ENCODE measurements at regions of chr2 and their contacts with region 1.

Region 1: GRCh38 chr2:73651586-73652230 is 9.5 kb upstream of the NAT8 start:
- DNase-seq: no peak
- H3K4me3 ChIP-seq: no peak overlapping the region
- H3K27ac ChIP-seq: no peak overlapping the region
- H3K4me1 ChIP-seq: no peaks in the 10 kb centered on the region
- H3K27me3 ChIP-seq: peaks cover 5 to 11% of the 10 kb centered on the region in 2 experiments
- CTCF ChIP-seq: no peak
- POLR2A ChIP-seq: no peak

Region 2: DNA sequence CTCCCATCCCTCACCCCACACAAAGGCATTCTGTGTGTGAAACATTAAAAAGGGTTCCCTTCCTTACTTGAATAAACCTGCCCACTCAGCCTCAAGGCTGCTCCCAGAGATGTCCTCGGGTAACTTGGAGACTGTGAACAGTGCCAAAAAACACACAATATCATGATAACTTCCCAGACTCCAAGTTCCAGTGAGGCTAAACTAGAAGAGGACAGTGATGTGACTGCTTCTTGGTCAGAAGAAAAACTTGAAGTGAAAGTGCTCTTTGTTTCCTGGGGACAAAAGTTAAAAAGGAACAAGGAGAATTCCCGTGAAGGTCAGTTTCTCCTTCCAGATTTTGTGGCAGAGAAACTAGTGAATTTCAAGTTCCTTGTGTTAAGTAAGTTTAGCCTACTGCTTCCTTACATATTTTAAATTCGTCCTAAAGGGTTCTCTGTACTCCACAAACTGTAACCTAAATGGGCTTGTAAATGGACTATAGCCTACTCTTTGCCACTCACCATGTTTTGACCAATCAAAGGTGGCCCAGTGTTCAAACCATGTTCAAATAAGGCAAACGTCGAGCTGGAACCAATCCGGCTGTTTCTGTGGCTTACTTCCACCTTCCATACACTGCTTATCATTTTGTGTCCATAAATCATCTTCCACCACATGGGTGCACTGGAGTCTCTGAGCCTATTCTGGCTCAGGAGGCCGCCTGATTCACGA is 65.0 kb after region 1 on chr2:
- CTCF ChIA-PET with region 1: no interaction called
- POLR2A ChIA-PET with region 1: no interaction called
- dilution Hi-C with region 1: no loop called
- intact Hi-C with region 1: loop called (anchors 2 kb)
- DNase-seq: peak; percentile 80
- H3K4me3 ChIP-seq: no peak overlapping the region
- H3K27ac ChIP-seq: no peak overlapping the region
- H3K4me1 ChIP-seq: no peaks in the 10 kb centered on the region
- H3K27me3 ChIP-seq: peaks cover 0 to 10% of the 10 kb centered on the region in 2 experiments
- CTCF ChIP-seq: no peak
- POLR2A ChIP-seq: no peak